ENCODE measurements at regions of chr12 and their contacts with region 1.

Region 1: GRCh38 chr12:66860752-66861750 is 182.2 kb upstream of the GRIP1 start:
- DNase-seq: peak; percentile 41 to 82 (median 68)
- ATAC-seq: peak; percentile 61
- H3K4me3 ChIP-seq: no peak overlapping the region
- H3K4me3 Mint-ChIP-seq: no peak overlapping the region
- H3K27ac ChIP-seq: no peak overlapping the region
- H3K27ac Mint-ChIP-seq: no peak overlapping the region
- H3K4me1 ChIP-seq: peaks cover 8% of the 10 kb centered on the region
- H3K4me1 Mint-ChIP-seq: peaks cover 25% of the 10 kb centered on the region
- H3K27me3 ChIP-seq: no peaks in the 10 kb centered on the region
- H3K27me3 Mint-ChIP-seq: peaks cover 4% of the 10 kb centered on the region
- CTCF ChIP-seq: peak; percentile 92

Region 2: GRCh38 chr12:66144791-66145754 is 716.0 kb before region 1 on chr12:
- CTCF ChIA-PET with region 1: no interaction called
- POLR2A ChIA-PET with region 1: no interaction called
- intact Hi-C with region 1: loop called in 1 of 2 experiments (anchors 5 kb)
- DNase-seq: peak in 2 of 9 experiments; percentile 19 to 42
- ATAC-seq: no peak
- H3K4me3 ChIP-seq: no peak overlapping the region
- H3K4me3 Mint-ChIP-seq: no peak overlapping the region
- H3K27ac ChIP-seq: no peak overlapping the region
- H3K27ac Mint-ChIP-seq: peak overlapping the region; percentile 82
- H3K4me1 ChIP-seq: no peaks in the 10 kb centered on the region
- H3K4me1 Mint-ChIP-seq: peaks cover 21% of the 10 kb centered on the region
- H3K27me3 ChIP-seq: no peaks in the 10 kb centered on the region
- H3K27me3 Mint-ChIP-seq: no peaks in the 10 kb centered on the region
- CTCF ChIP-seq: peak; percentile 35

Region 3: DNA sequence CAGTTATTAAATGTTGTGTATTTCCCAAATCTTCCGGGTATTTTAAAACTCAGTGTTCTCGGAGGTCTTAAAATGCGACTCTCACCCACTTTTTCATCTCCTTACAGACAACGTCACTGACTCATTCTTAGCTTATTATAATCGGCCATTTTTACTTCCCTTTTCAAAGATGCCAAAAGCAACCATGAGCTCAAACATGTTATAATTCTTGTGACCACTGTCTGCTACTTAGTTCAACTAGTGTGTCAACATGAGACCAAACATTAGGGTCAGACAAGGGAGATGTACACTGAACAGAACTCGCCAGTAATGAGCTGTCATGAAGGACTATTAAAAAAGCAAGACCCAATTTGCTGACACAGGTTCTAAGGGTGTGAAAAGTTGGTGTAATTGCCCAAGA is 178.0 kb before region 1 on chr12:
- CTCF ChIA-PET with region 1: interaction called, 11 read pairs
- POLR2A ChIA-PET with region 1: no interaction called
- intact Hi-C with region 1: no loop called
- DNase-seq: no peak
- ATAC-seq: no peak
- H3K4me3 ChIP-seq: no peak overlapping the region
- H3K4me3 Mint-ChIP-seq: no peak overlapping the region
- H3K27ac ChIP-seq: no peak overlapping the region
- H3K27ac Mint-ChIP-seq: no peak overlapping the region
- H3K4me1 ChIP-seq: no peaks in the 10 kb centered on the region
- H3K4me1 Mint-ChIP-seq: no peaks in the 10 kb centered on the region
- H3K27me3 ChIP-seq: peaks cover 0 to 5% of the 10 kb centered on the region in 2 experiments
- H3K27me3 Mint-ChIP-seq: peaks cover 15% of the 10 kb centered on the region
- CTCF ChIP-seq: no peak

Region 4: DNA sequence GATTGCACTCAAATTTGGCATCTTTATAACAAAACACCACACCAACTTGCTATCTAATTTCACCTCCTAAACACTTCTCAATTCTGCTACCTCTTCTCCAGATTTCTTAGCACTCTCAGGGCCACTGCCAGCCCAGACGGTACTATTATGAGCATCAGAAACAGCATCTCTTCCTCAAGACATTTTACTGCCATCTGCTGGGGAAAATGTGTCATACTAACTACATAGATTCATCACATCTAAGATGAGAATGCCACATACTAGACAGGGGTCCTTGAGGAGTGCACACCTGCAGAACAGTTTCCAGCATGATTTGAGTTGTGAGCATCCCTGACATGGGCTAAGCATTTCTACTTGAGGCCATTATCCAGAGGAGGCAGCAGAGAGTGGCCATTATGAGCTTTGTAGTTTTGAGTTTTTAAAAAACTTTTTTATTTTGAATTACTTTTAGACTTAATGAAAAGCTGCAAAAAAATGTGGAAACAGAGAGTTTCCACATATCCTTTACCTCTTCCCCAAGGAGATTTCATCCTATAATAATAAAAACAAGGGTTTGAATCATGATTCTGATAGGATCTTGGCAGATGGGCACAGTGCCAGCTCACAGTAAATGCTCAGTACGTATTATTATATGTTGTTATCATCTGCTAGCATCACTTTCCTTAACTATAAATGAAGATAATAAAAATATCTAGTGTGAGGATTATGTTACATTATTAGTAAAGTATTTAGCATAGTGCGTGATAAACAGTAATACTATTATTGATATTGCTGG is 167.0 kb before region 1 on chr12:
- CTCF ChIA-PET with region 1: interaction called, 101 read pairs
- POLR2A ChIA-PET with region 1: no interaction called
- intact Hi-C with region 1: loop called (anchors 1 kb)
- DNase-seq: peak in 3 of 9 experiments; percentile 20 to 77 (median 64)
- ATAC-seq: peak; percentile 78
- H3K4me3 ChIP-seq: no peak overlapping the region
- H3K4me3 Mint-ChIP-seq: no peak overlapping the region
- H3K27ac ChIP-seq: no peak overlapping the region
- H3K27ac Mint-ChIP-seq: no peak overlapping the region
- H3K4me1 ChIP-seq: peaks cover 12% of the 10 kb centered on the region
- H3K4me1 Mint-ChIP-seq: peaks cover 23% of the 10 kb centered on the region
- H3K27me3 ChIP-seq: no peaks in the 10 kb centered on the region
- H3K27me3 Mint-ChIP-seq: no peaks in the 10 kb centered on the region
- CTCF ChIP-seq: peak; percentile 77

Region 5: DNA sequence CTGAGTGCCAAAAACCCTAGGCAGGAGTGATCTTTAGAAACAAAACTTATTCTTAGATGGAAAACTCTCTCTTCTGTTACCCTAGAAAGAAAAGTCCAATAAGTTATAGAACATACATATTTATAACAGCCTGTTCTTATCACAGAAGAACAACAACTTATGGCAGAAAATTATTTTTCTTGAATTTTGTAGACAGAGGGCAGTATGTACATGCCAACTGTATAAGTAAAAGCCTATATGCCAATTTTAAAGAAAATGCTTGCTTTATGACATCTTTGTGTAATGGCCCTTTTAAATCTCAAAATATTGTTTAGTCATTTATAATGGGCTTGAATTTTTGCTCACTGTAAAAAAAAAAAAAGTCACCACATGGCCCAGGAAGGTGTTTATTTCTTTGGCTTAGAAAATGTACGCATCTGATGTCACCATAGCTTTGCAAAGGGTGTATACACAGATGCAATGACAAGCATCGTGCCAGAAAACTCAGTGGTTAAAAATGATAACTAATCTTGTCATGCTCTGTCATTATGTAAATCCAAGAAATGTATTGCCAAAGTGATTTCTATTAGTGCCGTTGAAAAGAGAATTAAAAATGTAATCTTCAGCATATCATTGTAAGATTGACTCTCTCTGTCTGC is 143.9 kb before region 1 on chr12:
- CTCF ChIA-PET with region 1: interaction called, 13 read pairs
- POLR2A ChIA-PET with region 1: no interaction called
- intact Hi-C with region 1: loop called in 1 of 2 experiments (anchors 1 kb)
- DNase-seq: peak in 1 of 9 experiments; percentile 23
- ATAC-seq: no peak
- H3K4me3 ChIP-seq: no peak overlapping the region
- H3K4me3 Mint-ChIP-seq: no peak overlapping the region
- H3K27ac ChIP-seq: no peak overlapping the region
- H3K27ac Mint-ChIP-seq: no peak overlapping the region
- H3K4me1 ChIP-seq: peaks cover 21% of the 10 kb centered on the region
- H3K4me1 Mint-ChIP-seq: peaks cover 32% of the 10 kb centered on the region
- H3K27me3 ChIP-seq: no peaks in the 10 kb centered on the region
- H3K27me3 Mint-ChIP-seq: no peaks in the 10 kb centered on the region
- CTCF ChIP-seq: no peak

Region 6: GRCh38 chr12:66876466-66876865 is 15.4 kb after region 1 on chr12:
- CTCF ChIA-PET with region 1: interaction called, 10 read pairs
- POLR2A ChIA-PET with region 1: no interaction called
- intact Hi-C with region 1: no loop called
- DNase-seq: no peak
- ATAC-seq: no peak
- H3K4me3 ChIP-seq: no peak overlapping the region
- H3K4me3 Mint-ChIP-seq: no peak overlapping the region
- H3K27ac ChIP-seq: no peak overlapping the region
- H3K27ac Mint-ChIP-seq: no peak overlapping the region
- H3K4me1 ChIP-seq: no peaks in the 10 kb centered on the region
- H3K4me1 Mint-ChIP-seq: peaks cover 6% of the 10 kb centered on the region
- H3K27me3 ChIP-seq: no peaks in the 10 kb centered on the region
- H3K27me3 Mint-ChIP-seq: peaks cover 12% of the 10 kb centered on the region
- CTCF ChIP-seq: no peak